PC-9 (cell line): ENCODE measurements at regions of chr17 and their contacts with region 1.

Region 1: DNA sequence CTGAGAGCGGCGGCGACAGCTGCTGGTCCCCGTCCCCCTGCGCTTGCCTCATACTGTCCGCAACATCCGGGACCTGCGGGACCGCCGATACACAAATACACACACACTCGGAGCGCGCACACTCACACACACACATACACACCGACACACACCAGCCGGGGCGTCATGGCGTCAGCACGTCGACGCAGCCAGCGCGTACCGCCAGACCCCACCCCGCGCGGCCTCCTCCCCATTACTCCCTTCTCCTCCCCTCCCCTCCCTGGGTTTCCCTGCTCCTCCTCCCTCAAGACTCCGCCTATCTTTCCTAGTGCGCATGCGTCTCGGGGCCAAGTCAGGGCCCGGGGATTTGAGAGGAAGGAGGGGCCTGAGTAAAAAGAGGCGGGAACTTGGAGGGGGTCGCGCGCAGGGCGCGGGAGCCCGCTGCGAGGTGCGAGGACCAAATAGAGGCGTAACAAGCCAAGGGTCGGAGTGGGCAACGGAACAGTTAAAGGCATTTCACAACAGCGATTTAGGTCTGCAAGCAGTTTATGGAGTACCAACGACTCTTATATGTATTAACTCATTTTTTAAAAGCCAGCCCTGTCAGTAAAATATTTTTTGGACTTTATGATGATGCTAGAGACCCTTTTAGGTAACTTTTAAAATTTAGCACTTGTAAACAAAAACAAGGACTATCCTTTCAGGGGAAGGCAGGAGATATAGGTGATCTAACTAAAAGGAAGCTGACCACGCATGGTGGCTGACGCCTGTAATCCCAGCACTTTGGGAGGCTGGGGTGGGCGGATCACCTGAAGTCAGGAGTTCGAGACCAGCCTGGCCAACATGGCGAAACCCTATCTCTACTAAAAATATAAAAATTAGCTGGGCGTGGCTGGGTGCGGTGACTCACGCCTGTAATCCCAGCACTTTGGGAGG is at the start of gene SPOP:
- DNase-seq: peak; percentile 97
- H3K4me3 ChIP-seq: peak within 1 kb of the TSS; percentile 85
- H3K27ac ChIP-seq: peak within 1 kb of the TSS; percentile 42
- H3K4me1 ChIP-seq: peaks cover 13% of the 10 kb centered on the region
- H3K27me3 ChIP-seq: peaks cover 6% of the 10 kb centered on the region
- CTCF ChIP-seq: no peak
- total RNA-seq, gene SPOP: 41.7 and 47.3 TPM in 2 replicates

Region 2: DNA sequence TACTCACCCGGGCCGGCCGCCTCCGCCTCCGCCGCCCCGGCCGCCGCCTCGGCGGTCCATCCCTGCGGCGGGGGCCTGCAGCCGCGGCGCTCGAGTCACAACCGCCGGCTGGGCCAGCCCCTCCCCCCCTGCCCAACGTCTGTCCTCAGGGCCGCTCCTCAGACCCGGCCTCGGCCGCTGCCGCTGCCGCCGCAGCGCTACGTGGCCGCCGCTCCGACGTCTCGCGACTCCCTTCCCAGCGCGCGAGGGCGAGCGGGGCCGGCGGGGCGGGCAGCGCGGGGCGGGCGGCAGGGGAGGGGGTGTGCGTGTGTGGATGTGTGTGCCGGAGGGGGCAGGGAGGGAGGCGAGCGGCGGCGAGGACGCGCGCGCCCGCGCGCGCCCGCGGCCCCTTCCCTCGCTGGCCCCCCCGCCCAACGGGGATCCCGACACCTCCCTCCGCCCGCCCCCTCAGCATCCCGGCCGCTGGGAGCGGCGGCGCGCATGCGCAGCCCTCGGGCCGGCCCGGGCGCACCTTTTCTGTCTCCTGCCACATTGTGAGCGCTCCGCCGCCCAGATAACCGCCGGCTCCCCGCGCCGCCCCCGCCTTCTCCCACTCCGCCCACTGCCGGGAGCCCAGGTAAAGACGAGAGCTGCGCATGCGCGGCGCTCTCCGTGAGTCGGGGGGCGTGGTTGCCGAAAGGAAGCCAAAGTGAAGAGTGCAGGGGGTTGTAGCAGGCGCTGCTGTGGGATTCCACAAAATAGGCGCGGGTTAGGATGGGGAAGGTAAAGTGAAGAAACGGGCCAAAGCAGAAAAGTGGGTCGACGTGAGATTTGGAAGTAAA is 316.1 kb before region 1 on chr17 and contains the start of gene ZNF652:
- CTCF ChIA-PET with region 1: no interaction called
- POLR2A ChIA-PET with region 1: interaction called, 13 read pairs
- intact Hi-C with region 1: no loop called
- DNase-seq: peak; percentile 93 to 99
- H3K4me3 ChIP-seq: peak within 1 kb of the TSS; percentile 84
- H3K27ac ChIP-seq: peak within 1 kb of the TSS; percentile 31; the same call in 1 of the 2 replicates
- H3K4me1 ChIP-seq: peaks cover 34% of the 10 kb centered on the region
- H3K27me3 ChIP-seq: no peaks in the 10 kb centered on the region
- CTCF ChIP-seq: no peak
- total RNA-seq, gene ZNF652: 44.8 and 49.8 TPM in 2 replicates

Region 3: GRCh38 chr17:49624896-49625295 is 53.3 kb before region 1 on chr17:
- CTCF ChIA-PET with region 1: no interaction called
- POLR2A ChIA-PET with region 1: no interaction called
- intact Hi-C with region 1: loop called (anchors 10 kb)
- DNase-seq: no peak
- H3K4me3 ChIP-seq: no peak overlapping the region
- H3K27ac ChIP-seq: no peak overlapping the region
- H3K4me1 ChIP-seq: no peaks in the 10 kb centered on the region
- H3K27me3 ChIP-seq: no peaks in the 10 kb centered on the region
- CTCF ChIP-seq: no peak

Region 4: DNA sequence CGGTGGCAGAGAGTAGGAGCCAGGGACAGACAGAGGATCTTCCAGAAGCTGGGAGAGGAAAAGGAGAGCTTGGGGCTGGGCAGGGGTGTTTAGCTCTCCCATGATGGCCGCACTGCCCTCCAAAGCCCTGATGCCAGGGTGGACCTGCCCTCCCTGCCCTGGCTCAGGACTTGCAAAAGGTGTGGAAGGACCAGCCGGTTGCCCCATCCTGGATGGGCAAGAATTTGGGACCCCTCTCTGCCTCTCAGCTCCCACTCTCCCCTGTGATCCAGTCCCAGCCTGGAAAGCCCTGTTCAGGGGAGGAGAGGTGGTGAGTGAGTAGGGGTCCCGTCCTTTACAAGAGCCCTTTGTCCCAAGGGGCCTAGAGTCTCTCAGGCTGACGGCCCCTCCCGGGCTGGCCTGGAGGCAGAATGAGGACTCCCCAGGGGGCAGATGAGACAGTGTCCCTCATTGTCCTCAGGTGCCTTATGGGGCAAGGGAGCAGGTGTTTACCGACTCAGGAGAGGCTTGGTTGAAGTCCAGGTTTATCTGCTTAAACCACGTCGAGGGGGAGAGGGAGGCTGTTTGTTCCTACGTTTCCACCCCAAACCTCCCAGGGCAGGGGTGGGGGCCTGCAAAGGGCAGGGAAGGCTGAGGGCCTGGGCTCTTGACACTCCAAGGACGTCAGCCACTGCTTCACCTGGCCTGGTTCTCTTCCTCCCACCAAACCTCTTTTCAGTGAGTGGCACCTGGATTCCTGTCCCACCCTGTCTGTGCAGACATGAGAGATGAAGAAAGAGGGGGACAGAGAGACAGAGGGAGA is 358.5 kb after region 1 on chr17:
- CTCF ChIA-PET with region 1: no interaction called
- POLR2A ChIA-PET with region 1: interaction called, 10 read pairs
- intact Hi-C with region 1: no loop called
- DNase-seq: no peak
- H3K4me3 ChIP-seq: no peak overlapping the region
- H3K27ac ChIP-seq: no peak overlapping the region
- H3K4me1 ChIP-seq: peaks cover 30% of the 10 kb centered on the region
- H3K27me3 ChIP-seq: no peaks in the 10 kb centered on the region
- CTCF ChIP-seq: no peak